ENCODE measurements at regions of chr10 and their contacts with region 1.

Region 1: DNA sequence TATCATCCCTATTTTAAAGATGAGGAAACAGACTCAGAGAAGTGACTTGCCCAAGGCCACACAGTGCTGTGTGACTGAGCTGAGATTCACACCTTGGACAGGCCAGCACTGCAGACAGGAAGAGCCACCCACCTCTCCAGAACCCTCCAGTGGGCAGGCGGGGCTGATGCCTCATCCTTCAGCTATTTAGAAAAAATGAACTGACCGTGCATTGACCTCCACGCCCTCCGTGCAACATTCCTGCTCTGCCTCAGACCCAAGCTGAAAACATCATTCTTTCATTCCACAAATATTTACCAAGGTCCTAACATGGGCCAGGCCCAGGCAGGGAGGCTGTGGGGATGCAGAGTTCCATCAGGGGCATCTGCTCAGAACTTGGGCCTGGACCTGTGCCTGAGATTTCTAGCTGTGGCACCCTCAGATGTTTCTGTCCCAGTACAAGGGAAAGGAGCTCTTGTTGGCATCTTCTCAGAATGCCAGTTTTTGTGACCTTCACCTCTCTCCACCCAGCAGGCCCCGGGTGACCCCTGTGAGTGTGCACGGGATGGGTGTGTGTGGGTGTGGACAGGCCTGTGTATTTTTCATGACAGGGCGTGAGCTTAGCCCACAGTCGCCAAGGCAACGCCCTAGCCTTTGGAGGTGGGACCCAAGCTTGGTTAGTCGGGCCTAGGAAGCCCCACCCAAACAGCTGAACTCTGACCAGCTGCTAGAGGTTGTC is 6.5 kb downstream of the VSIR start:
- DNase-seq: peak; percentile 96

Region 2: GRCh38 chr10:71679425-71679824 is 87.4 kb before region 1 on chr10:
- in situ Hi-C with region 1: no loop called
- DNase-seq: no peak

Region 3: GRCh38 chr10:71840177-71840957 is 73.5 kb after region 1 on chr10:
- in situ Hi-C with region 1: loop called (anchors 10 kb)
- DNase-seq: peak; percentile 91

Measured in Caki2 (cell line).